ENCODE measurements at regions of chr1 and their contacts with region 1.

Region 1: GRCh38 chr1:8702850-8703810 is 114.3 kb downstream of the RERE start:
- DNase-seq: peak; percentile 82
- ATAC-seq: peak; percentile 95
- H3K4me3 ChIP-seq: peak overlapping the region; percentile 63 to 78
- H3K27ac ChIP-seq: peak overlapping the region; percentile 93
- H3K4me1 ChIP-seq: peaks cover 66% of the 10 kb centered on the region
- H3K27me3 ChIP-seq: no peaks in the 10 kb centered on the region
- CTCF ChIP-seq: peak; percentile 54

Region 2: DNA sequence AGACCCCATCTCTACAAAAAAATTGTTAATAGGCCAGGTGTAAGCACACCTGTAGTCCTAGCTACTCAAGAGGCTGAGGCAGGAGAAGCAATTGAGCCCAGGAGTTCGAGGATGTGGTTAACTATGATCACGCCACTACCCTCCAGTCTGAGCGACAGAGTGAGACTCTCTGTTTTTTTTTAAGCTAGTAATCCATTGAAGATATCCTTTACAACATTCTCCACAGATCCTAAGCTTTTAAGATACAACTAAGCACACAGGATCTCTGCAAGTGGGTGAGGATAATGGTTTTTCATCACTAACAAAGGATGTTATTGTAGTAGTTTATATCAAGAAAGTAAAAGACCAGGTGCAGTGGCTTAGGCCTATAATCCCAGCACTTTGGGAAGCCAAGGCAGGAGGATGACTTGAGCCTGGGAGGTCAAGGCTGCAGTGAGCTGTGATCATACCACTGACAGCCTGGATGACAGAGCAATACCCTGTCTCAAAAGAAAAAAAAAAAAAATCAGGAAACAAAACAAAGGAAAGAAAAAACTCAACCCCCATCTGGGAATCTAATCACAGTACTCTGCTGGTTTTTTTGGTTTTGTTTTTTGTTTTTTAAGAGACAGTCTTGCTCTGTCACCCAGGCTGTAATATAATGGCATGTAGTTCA is 51.8 kb before region 1 on chr1:
- CTCF ChIA-PET with region 1: no interaction called
- POLR2A ChIA-PET with region 1: interaction called, 11 read pairs
- in situ Hi-C with region 1: no loop called
- intact Hi-C with region 1: no loop called
- DNase-seq: no peak
- ATAC-seq: no peak
- H3K4me3 ChIP-seq: no peak overlapping the region
- H3K27ac ChIP-seq: no peak overlapping the region
- H3K4me1 ChIP-seq: peaks cover 17% of the 10 kb centered on the region
- H3K27me3 ChIP-seq: no peaks in the 10 kb centered on the region
- CTCF ChIP-seq: no peak

Region 3: GRCh38 chr1:8939362-8939995 is 236.3 kb after region 1 on chr1:
- CTCF ChIA-PET with region 1: no interaction called
- POLR2A ChIA-PET with region 1: no interaction called
- in situ Hi-C with region 1: no loop called
- intact Hi-C with region 1: no loop called
- DNase-seq: no peak
- ATAC-seq: no peak
- H3K4me3 ChIP-seq: no peak overlapping the region
- H3K27ac ChIP-seq: no peak overlapping the region
- H3K4me1 ChIP-seq: peaks cover 14% of the 10 kb centered on the region
- H3K27me3 ChIP-seq: no peaks in the 10 kb centered on the region
- CTCF ChIP-seq: no peak